ENCODE measurements at regions of chrX and their contacts with region 1.

Region 1: GRCh38 chrX:103343105-103343504 is 13.1 kb downstream of the TCEAL7 start:
- DNase-seq: peak in 7 of 9 donors; percentile 7 to 55 (median 33)
- ATAC-seq: peak; percentile 46
- H3K4me3 ChIP-seq: no peak overlapping the region
- H3K4me3 Mint-ChIP-seq: no peak overlapping the region
- H3K27ac ChIP-seq: no peak overlapping the region
- H3K27ac Mint-ChIP-seq: peak overlapping the region in 2 of 9 donors; percentile 13 to 23
- H3K4me1 ChIP-seq: no peaks in the 10 kb centered on the region
- H3K4me1 Mint-ChIP-seq: peaks cover 0 to 5% (median 4%) of the 10 kb centered on the region in 7 donors
- H3K27me3 ChIP-seq: no peaks in the 10 kb centered on the region
- H3K27me3 Mint-ChIP-seq: peaks cover 0 to 8% (median 0%) of the 10 kb centered on the region in 5 donors

Region 2: GRCh38 chrX:103254921-103255493 is 88.1 kb before region 1 on chrX and contains the start of gene TCEAL8:
- CTCF ChIA-PET with region 1: no interaction called
- POLR2A ChIA-PET with region 1: no interaction called
- intact Hi-C with region 1: loop called in 1 of 2 experiments (anchors 10 kb)
- DNase-seq: peak in 8 of 9 donors; percentile 28 to 66 (median 47)
- ATAC-seq: peak; percentile 94
- H3K4me3 ChIP-seq: peak within 1 kb of the TSS; percentile 85
- H3K4me3 Mint-ChIP-seq: peak within 1 kb of the TSS; percentile 92 to 98 (median 96)
- H3K27ac ChIP-seq: peak within 1 kb of the TSS; percentile 85
- H3K27ac Mint-ChIP-seq: peak within 1 kb of the TSS; percentile 87 to 97 (median 94)
- H3K4me1 ChIP-seq: no peaks in the 10 kb centered on the region
- H3K4me1 Mint-ChIP-seq: peaks cover 12 to 33% (median 20%) of the 10 kb centered on the region in 7 donors
- H3K27me3 ChIP-seq: no peaks in the 10 kb centered on the region
- H3K27me3 Mint-ChIP-seq: peaks cover 0 to 11% (median 0%) of the 10 kb centered on the region in 5 donors
- total RNA-seq, gene TCEAL8: 12.2 to 35.0 (median 33.2) TPM

Region 3: GRCh38 chrX:103304705-103305104 is 38.4 kb before region 1 on chrX:
- CTCF ChIA-PET with region 1: no interaction called
- POLR2A ChIA-PET with region 1: no interaction called
- intact Hi-C with region 1: no loop called
- DNase-seq: peak in 2 of 9 donors; percentile 1 to 6
- ATAC-seq: no peak
- H3K4me3 ChIP-seq: no peak overlapping the region
- H3K4me3 Mint-ChIP-seq: no peak overlapping the region
- H3K27ac ChIP-seq: no peak overlapping the region
- H3K27ac Mint-ChIP-seq: no peak overlapping the region
- H3K4me1 ChIP-seq: no peaks in the 10 kb centered on the region
- H3K4me1 Mint-ChIP-seq: peaks cover 2 to 11% (median 8%) of the 10 kb centered on the region in 7 donors
- H3K27me3 ChIP-seq: no peaks in the 10 kb centered on the region
- H3K27me3 Mint-ChIP-seq: no peaks in the 10 kb centered on the region

Region 4: DNA sequence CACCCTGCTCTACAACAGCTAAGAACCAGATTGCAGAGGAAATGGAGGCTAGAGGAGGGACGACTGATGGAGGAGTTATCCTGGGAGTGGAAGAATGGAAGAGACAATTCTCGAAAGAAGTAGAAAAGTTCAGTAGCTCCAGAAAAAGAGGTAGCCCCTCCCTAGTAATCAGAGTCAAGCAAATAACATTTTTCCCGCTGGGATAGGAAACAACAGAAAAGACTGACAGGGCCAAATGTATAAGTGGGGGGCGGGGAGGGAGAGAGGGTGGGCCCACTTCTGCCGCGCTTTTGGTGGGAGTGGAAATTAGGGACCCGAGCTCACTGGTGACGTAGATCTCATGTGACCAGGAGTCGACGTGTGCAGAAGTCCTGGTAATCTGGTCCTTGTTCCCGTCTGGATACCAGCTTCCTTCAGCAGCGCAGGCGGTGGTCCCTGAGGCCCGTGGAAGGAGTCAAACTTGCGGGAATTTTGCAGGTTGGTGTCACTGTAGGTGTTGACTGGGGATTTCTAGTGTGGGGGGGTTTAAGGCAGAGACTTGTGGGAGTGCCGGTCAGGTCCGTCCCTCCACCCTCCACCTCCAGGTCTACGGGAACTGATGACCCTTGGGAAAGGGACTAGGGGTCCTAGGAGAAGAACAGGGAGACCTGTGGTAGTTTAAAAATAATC is 13.2 kb after region 1 on chrX and contains the start of gene TCEAL9:
- CTCF ChIA-PET with region 1: no interaction called
- POLR2A ChIA-PET with region 1: interaction called, 4 read pairs
- intact Hi-C with region 1: loop called in 1 of 2 experiments (anchors 2 kb)
- DNase-seq: no peak
- ATAC-seq: no peak
- H3K4me3 ChIP-seq: peak within 1 kb of the TSS; percentile 62
- H3K4me3 Mint-ChIP-seq: peak within 1 kb of the TSS; percentile 79 to 91 (median 88)
- H3K27ac ChIP-seq: peak within 1 kb of the TSS; percentile 52
- H3K27ac Mint-ChIP-seq: peak within 1 kb of the TSS in 8 of 9 donors; percentile 12 to 90 (median 81)
- H3K4me1 ChIP-seq: no peaks in the 10 kb centered on the region
- H3K4me1 Mint-ChIP-seq: peaks cover 0 to 20% (median 11%) of the 10 kb centered on the region in 7 donors
- H3K27me3 ChIP-seq: no peaks in the 10 kb centered on the region
- H3K27me3 Mint-ChIP-seq: peaks cover 0 to 8% (median 0%) of the 10 kb centered on the region in 5 donors
- total RNA-seq, gene TCEAL9: 0.51 to 4.2 (median 1.1) TPM

Region 5: DNA sequence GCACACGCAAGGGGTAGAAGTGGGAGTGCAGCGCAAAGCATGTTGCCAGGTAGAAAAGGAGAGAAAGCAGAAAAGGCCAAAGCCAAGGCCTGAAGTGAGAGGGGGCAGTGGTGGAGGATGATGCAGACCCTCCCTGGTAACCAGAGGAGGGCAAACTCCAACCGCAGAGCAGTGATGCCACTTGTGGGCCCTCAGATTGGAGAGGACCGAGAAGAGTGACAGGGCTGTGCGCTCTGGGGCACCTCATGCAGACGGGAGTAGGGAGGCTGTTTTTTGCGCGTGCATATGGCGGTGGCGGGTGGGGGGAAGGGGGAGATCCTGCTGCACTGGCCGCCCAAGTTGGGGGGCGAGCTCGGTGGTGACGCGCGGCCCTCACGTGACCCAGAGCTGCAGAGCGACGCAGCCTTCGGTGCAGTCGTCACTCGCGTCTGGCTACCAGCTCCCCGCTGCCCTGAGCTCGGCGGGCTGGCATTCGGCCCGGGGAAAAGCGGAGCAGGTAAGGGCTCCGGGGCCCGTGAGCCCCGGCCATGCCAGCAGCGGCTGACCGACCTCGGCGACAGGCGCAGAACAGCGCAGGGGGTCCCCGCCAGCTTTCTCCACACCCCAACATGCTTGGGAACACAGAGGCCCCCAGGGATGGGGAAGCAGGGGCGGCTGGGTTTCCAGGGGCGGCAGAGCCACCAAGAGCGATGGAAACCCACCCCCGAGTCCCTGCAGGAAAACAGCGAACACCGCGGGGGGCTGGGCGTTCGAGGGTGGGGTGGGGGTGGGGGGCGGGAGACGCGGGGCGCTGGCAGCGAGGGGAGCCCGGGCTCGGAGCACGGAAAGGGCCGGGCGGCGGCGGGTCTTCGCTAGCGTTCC is 33.2 kb after region 1 on chrX and contains the start of gene BEX3:
- CTCF ChIA-PET with region 1: no interaction called
- POLR2A ChIA-PET with region 1: interaction called, 4 read pairs
- intact Hi-C with region 1: loop called in 1 of 2 experiments (anchors 1 kb)
- DNase-seq: peak in 8 of 9 donors; percentile 21 to 61 (median 50)
- ATAC-seq: peak; percentile 73
- H3K4me3 ChIP-seq: peak within 1 kb of the TSS; percentile 27
- H3K4me3 Mint-ChIP-seq: peak within 1 kb of the TSS; percentile 74 to 91 (median 84)
- H3K27ac ChIP-seq: peak within 1 kb of the TSS; percentile 73
- H3K27ac Mint-ChIP-seq: peak within 1 kb of the TSS in 8 of 9 donors; percentile 64 to 89 (median 76)
- H3K4me1 ChIP-seq: no peaks in the 10 kb centered on the region
- H3K4me1 Mint-ChIP-seq: peaks cover 3 to 14% (median 7%) of the 10 kb centered on the region in 7 donors
- H3K27me3 ChIP-seq: no peaks in the 10 kb centered on the region
- H3K27me3 Mint-ChIP-seq: peaks cover 0 to 4% (median 0%) of the 10 kb centered on the region in 5 donors
- total RNA-seq, gene BEX3: 5.9 to 75.5 (median 28.0) TPM

Region 6: DNA sequence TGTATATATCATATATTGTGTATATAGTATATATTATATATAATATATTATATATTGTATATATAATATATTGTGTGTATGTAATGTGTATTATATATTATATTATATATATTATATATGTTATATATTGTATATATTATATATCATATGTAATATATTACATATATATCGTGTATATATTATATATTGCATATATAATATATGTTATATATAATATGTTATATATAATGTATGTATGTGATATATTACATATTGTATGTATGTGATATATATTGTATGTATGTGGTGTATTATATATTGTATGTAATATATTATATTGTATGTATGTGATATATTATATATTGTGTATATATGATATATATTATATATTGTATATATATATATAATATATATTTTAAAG is 145.7 kb after region 1 on chrX:
- CTCF ChIA-PET with region 1: interaction called, 3 read pairs
- POLR2A ChIA-PET with region 1: no interaction called
- intact Hi-C with region 1: loop called in 1 of 2 experiments (anchors 1 kb)
- DNase-seq: no peak
- ATAC-seq: no peak
- H3K4me3 ChIP-seq: no peak overlapping the region
- H3K4me3 Mint-ChIP-seq: no peak overlapping the region
- H3K27ac ChIP-seq: no peak overlapping the region
- H3K27ac Mint-ChIP-seq: no peak overlapping the region
- H3K4me1 ChIP-seq: no peaks in the 10 kb centered on the region
- H3K4me1 Mint-ChIP-seq: peaks cover 0 to 3% (median 0%) of the 10 kb centered on the region in 7 donors
- H3K27me3 ChIP-seq: no peaks in the 10 kb centered on the region
- H3K27me3 Mint-ChIP-seq: peaks cover 0 to 6% (median 3%) of the 10 kb centered on the region in 5 donors

Measured in naive thymus-derived CD4-positive, alpha-beta T cell (primary cell).